Head of caudate nucleus (tissue), 42 donors: ENCODE measurements at regions of chr15 and their contacts with region 1.

Region 1: DNA sequence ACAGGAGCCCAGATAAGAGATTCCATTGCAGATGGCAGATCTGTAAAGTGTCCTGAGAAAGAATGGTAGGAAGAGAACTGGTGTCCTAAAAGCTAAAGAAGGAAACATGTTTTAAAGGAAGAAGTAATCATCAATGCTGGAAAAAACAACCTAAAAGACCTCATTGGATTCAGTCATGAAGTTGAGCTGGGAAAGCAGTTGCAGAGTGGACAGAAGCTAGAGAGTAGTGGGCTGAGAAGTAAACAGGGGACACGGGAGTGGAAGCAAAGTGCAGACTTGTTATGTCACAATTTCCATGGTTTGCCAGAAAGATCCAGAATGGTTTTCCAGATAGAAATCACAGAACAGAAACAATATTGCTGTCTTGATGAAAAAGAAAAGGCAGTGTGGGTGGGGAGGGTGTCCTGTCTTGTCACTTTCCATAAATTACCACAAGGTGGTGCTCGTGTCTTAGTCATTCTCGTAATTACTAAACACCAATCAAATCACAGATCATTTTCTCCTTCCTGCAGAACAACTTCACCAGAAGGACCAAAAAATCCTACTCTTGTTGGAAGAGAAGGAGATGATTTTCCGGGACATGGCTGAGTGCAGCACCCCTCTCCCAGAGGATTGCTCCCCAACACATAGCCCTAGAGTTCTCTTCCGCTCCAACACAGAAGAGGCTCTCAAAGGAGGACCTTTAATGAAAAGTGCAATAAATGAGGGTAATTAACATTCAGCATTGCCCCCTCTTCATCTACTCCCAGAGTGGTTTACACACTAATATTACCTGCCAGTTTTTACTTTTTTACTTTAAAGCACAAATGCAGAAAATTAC is 64.5 kb downstream of the KLHL25 start:
- DNase-seq: peak in 20 of 42 donors; percentile 24 to 84 (median 66)

Region 2: GRCh38 chr15:85667491-85668424 is 62.5 kb before region 1 on chr15:
- intact Hi-C with region 1: no loop called
- DNase-seq: no peak

Region 3: DNA sequence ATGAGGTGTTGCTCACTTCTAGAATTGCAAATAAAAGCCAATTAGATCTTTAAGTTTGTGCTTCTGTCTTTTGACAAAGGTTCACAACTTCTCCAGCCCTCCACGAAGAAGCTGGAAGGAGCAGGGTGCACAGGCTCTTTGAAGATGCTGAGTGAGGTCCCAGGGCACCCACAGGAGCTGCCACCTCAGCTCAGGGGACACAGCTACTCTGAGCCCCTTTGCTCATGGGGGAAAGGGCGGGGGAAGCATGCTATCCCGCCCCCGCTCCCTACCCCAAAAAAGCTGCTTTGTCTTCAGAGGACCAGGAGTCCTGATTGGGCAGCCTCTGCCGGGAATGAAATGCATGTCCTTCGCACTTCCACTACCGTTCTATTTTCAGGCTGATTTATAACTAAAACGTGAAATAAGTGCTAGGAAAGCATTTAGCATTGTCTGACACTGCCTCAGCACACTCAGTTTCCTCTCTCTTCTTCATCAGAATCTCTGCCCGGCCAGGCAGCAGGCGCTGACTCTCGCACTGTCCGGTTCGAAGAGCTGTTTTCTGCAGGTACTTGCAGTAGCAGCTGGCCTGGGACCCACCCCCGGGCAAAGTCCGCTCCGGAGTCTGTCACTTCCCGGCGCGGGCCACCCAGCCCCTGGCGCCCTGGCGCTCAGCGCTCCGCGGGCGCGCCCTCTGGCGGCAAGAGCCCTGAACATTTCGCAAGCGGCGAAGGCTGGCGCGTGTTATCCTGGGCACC is 110.0 kb after region 1 on chr15:
- intact Hi-C with region 1: loop called (anchors 2 kb)
- DNase-seq: peak; percentile 42 to 90 (median 81)